ENCODE measurements at regions of chr12 and their contacts with region 1.

Region 1: DNA sequence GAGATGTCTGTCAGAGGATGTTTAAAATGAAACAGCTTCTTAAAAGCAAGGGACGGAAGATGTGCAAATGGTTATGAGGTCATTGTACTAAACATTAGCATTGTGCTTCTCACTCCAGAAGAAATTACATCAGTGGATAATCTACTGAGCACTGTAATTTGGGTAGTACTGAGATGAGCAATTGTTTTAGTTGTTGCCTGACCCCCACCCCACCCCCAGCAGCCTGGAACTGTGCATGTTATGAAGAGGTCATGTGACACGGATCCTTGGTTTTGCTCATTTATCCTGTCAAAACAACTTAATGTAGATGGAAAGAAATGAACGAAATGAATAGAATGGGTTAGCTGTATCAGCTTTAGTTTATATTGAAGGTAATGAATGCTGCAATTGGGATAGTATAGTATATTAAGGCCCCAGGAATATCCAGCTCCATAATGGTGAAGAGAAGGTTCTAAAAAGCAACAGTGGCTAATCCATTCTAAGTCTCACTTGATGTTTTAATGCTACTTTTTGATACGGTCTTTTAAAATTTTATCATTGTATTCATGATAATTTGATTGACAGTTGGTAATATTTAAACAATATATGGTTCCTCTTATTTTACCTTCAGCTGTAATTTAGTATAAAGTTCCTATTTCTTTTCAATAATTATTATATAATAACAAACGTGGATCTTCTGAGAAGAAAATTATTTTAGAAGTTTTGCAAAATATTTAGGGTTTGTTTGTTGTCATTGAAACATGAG is 58.5 kb downstream of the WNK1 start:
- DNase-seq: no peak
- ATAC-seq: no peak
- H3K4me3 ChIP-seq: no peak overlapping the region
- H3K27ac ChIP-seq: no peak overlapping the region
- H3K4me1 ChIP-seq: no peaks in the 10 kb centered on the region
- H3K27me3 ChIP-seq: no peaks in the 10 kb centered on the region
- CTCF ChIP-seq: no peak
- POLR2A ChIP-seq: no peak
- RAD21 ChIP-seq: no peak

Region 2: GRCh38 chr12:575948-576612 is 234.8 kb before region 1 on chr12:
- CTCF ChIA-PET with region 1: interaction called, 24 read pairs
- POLR2A ChIA-PET with region 1: no interaction called
- RAD21 ChIA-PET with region 1: no interaction called
- intact Hi-C with region 1: loop called (anchors 2 kb)
- DNase-seq: peak; percentile 41
- ATAC-seq: peak; percentile 72
- H3K4me3 ChIP-seq: no peak overlapping the region
- H3K27ac ChIP-seq: peak overlapping the region; percentile 31
- H3K4me1 ChIP-seq: peaks cover 33 to 52% of the 10 kb centered on the region in 2 experiments
- H3K27me3 ChIP-seq: no peaks in the 10 kb centered on the region
- CTCF ChIP-seq: peak in 2 of 3 experiments; percentile 94 to 98; a peak in 4 of 6 replicates
- POLR2A ChIP-seq: no peak
- RAD21 ChIP-seq: no peak

Region 3: GRCh38 chr12:614411-614970 is 196.4 kb before region 1 on chr12:
- CTCF ChIA-PET with region 1: interaction called, 14 read pairs
- POLR2A ChIA-PET with region 1: no interaction called
- RAD21 ChIA-PET with region 1: interaction called in 1 of 2 experiments, 4 read pairs
- intact Hi-C with region 1: no loop called
- DNase-seq: no peak
- ATAC-seq: peak; percentile 67
- H3K4me3 ChIP-seq: no peak overlapping the region
- H3K27ac ChIP-seq: no peak overlapping the region
- H3K4me1 ChIP-seq: peaks cover 0 to 8% of the 10 kb centered on the region in 2 experiments; a peak in 2 of 4 replicates
- H3K27me3 ChIP-seq: no peaks in the 10 kb centered on the region
- CTCF ChIP-seq: peak; percentile 13 to 23 (median 17); a peak in 3 of 6 replicates
- POLR2A ChIP-seq: no peak
- RAD21 ChIP-seq: peak; percentile 64

Region 4: DNA sequence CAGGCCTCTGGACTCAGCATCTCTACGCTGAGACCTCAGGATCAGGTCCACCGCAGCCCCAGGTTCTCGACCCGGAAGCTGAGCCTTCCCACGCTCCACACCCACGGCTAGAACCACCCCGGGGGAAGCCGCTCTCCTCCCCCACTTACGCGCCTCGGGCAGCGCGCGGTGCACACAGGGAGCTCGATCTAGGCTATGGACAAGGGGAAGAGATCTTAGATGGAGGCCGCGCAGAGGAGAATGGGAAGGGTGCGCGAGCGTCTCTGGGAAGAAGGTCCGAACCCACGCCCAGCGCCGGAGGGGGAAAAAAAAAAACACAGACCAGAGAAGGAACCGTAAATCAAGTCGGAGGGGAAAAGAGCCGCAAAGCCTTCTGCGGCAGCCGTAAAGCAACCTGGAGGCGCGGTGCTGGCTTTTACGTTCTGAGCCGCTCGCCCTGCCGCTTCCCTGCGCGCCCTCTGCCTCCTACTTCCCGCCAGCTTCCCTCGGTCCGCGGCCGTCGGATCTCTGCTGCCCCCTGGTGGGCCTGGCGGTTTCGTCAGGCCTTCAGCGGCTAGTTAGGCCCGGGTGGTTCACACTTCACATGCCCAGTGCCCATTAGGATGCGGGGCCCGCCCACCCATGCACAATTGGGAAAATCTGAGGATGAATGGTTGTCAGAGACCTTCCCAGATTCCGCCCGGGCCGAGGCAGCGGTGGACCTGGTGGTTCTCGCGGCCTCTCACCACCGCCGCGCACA is 138.8 kb after region 1 on chr12 and contains the start of gene RAD52:
- CTCF ChIA-PET with region 1: interaction called, 5 read pairs
- POLR2A ChIA-PET with region 1: no interaction called
- RAD21 ChIA-PET with region 1: no interaction called
- intact Hi-C with region 1: loop called (anchors 1 kb)
- DNase-seq: peak; percentile 97
- ATAC-seq: peak; percentile 93
- H3K4me3 ChIP-seq: peak within 1 kb of the TSS; percentile 57 to 94
- H3K27ac ChIP-seq: peak within 1 kb of the TSS; percentile 86
- H3K4me1 ChIP-seq: peaks cover 5 to 14% of the 10 kb centered on the region in 2 experiments
- H3K27me3 ChIP-seq: no peaks in the 10 kb centered on the region
- CTCF ChIP-seq: peak; percentile 92 to 98 (median 95)
- POLR2A ChIP-seq: peak; percentile 91
- RAD21 ChIP-seq: peak; percentile 90
- total RNA-seq, gene RAD52: 24.4 TPM